ENCODE measurements at regions of chr16 and their contacts with region 1.

Region 1: DNA sequence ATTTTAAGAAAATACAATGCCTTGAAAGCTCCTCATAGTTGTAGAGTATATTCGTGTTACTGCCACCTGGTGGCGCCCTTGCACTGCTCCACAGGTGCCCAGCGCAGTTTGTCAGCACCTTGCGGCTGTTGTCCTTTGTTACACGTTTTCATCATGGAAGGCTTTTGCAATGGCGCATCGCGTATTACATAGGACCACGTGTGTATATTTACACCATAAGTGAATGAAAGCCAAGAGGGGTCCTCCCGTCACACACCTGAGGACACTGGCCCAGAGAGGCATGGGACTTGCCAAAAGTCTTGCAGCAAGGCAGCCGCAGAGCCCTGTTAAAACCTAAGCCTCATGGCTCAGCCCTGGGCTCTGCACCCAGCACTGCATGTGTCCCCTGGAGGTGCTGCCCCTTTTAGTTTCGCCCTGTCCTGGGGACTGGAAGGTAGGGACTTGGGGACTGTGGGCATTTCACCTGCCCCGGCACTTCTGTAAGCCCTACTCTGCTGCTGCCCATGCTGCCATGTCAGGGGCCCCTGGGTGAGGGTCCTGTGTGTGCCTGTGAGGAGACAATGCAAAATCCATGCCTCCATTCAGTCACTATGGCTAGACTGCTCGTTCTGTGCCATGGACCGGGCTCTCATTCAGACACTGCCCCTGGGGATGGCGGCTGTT is 24.3 kb downstream of the POLR3E start:
- DNase-seq: peak; percentile 44 to 84 (median 72)
- ATAC-seq: peak; percentile 77
- H3K4me3 ChIP-seq: no peak overlapping the region
- H3K4me3 Mint-ChIP-seq: no peak overlapping the region
- H3K27ac ChIP-seq: no peak overlapping the region
- H3K27ac Mint-ChIP-seq: peak overlapping the region; percentile 70
- H3K4me1 ChIP-seq: peaks cover 6% of the 10 kb centered on the region
- H3K4me1 Mint-ChIP-seq: peaks cover 9% of the 10 kb centered on the region
- H3K27me3 ChIP-seq: no peaks in the 10 kb centered on the region
- H3K27me3 Mint-ChIP-seq: no peaks in the 10 kb centered on the region
- CTCF ChIP-seq: peak; percentile 92

Region 2: GRCh38 chr16:21184834-21185233 is 1136.6 kb before region 1 on chr16:
- CTCF ChIA-PET with region 1: no interaction called
- POLR2A ChIA-PET with region 1: no interaction called
- intact Hi-C with region 1: loop called in 1 of 2 experiments (anchors 5 kb)
- DNase-seq: no peak
- ATAC-seq: no peak
- H3K4me3 ChIP-seq: no peak overlapping the region
- H3K4me3 Mint-ChIP-seq: no peak overlapping the region
- H3K27ac ChIP-seq: no peak overlapping the region
- H3K27ac Mint-ChIP-seq: no peak overlapping the region
- H3K4me1 ChIP-seq: no peaks in the 10 kb centered on the region
- H3K4me1 Mint-ChIP-seq: peaks cover 3% of the 10 kb centered on the region
- H3K27me3 ChIP-seq: no peaks in the 10 kb centered on the region
- H3K27me3 Mint-ChIP-seq: peaks cover 2% of the 10 kb centered on the region
- CTCF ChIP-seq: no peak

Region 3: GRCh38 chr16:21226749-21227148 is 1094.7 kb before region 1 on chr16:
- CTCF ChIA-PET with region 1: no interaction called
- POLR2A ChIA-PET with region 1: no interaction called
- intact Hi-C with region 1: no loop called
- DNase-seq: no peak
- ATAC-seq: no peak
- H3K4me3 ChIP-seq: no peak overlapping the region
- H3K4me3 Mint-ChIP-seq: no peak overlapping the region
- H3K27ac ChIP-seq: no peak overlapping the region
- H3K27ac Mint-ChIP-seq: no peak overlapping the region
- H3K4me1 ChIP-seq: no peaks in the 10 kb centered on the region
- H3K4me1 Mint-ChIP-seq: no peaks in the 10 kb centered on the region
- H3K27me3 ChIP-seq: no peaks in the 10 kb centered on the region
- H3K27me3 Mint-ChIP-seq: peaks cover 52% of the 10 kb centered on the region
- CTCF ChIP-seq: no peak

Region 4: DNA sequence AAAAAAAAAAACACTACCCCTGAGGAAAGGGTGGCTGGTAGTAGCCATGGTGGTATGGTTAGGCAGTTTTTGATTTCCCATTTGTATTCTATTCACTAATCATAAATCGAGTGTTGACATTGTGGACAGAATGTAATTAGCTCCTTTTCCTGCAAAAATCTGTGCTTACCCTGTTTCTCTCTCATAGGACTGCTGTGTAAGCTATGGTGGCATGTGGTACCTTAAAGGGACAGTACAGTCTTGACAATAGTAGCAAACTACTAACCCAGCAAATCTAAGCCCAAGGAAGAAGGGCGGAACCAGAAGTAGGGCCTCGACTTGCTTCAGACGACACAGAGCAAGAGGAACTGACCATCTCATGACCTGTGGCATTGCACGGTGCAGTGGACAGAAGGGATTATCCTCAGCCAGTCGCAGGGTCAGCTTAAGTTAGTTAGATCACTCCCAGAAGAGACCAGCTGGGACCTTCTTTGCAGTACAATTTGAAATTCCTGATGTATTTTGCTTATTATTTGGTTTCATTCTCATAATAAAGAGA is 12.1 kb after region 1 on chr16:
- CTCF ChIA-PET with region 1: interaction called, 14 read pairs
- POLR2A ChIA-PET with region 1: interaction called, 3 read pairs
- intact Hi-C with region 1: no loop called
- DNase-seq: no peak
- ATAC-seq: no peak
- H3K4me3 ChIP-seq: no peak overlapping the region
- H3K4me3 Mint-ChIP-seq: no peak overlapping the region
- H3K27ac ChIP-seq: no peak overlapping the region
- H3K27ac Mint-ChIP-seq: peak overlapping the region; percentile 27
- H3K4me1 ChIP-seq: no peaks in the 10 kb centered on the region
- H3K4me1 Mint-ChIP-seq: peaks cover 26% of the 10 kb centered on the region
- H3K27me3 ChIP-seq: no peaks in the 10 kb centered on the region
- H3K27me3 Mint-ChIP-seq: no peaks in the 10 kb centered on the region
- CTCF ChIP-seq: no peak

Region 5: GRCh38 chr16:22374311-22375116 is 53.0 kb after region 1 on chr16 and contains the start of gene CDR2:
- CTCF ChIA-PET with region 1: interaction called, 7 read pairs
- POLR2A ChIA-PET with region 1: interaction called, 4 read pairs
- intact Hi-C with region 1: loop called (anchors 2 kb)
- DNase-seq: peak; percentile 96 to 99 (median 98)
- ATAC-seq: peak; percentile 92
- H3K4me3 ChIP-seq: peak within 1 kb of the TSS; percentile 60 to 71
- H3K4me3 Mint-ChIP-seq: peak within 1 kb of the TSS; percentile 97
- H3K27ac ChIP-seq: peak within 1 kb of the TSS; percentile 51 to 77
- H3K27ac Mint-ChIP-seq: peak within 1 kb of the TSS; percentile 95
- H3K4me1 ChIP-seq: peaks cover 34% of the 10 kb centered on the region
- H3K4me1 Mint-ChIP-seq: peaks cover 49% of the 10 kb centered on the region
- H3K27me3 ChIP-seq: no peaks in the 10 kb centered on the region
- H3K27me3 Mint-ChIP-seq: no peaks in the 10 kb centered on the region
- CTCF ChIP-seq: no peak
- total RNA-seq, gene CDR2: 119 to 120 TPM

Region 6: DNA sequence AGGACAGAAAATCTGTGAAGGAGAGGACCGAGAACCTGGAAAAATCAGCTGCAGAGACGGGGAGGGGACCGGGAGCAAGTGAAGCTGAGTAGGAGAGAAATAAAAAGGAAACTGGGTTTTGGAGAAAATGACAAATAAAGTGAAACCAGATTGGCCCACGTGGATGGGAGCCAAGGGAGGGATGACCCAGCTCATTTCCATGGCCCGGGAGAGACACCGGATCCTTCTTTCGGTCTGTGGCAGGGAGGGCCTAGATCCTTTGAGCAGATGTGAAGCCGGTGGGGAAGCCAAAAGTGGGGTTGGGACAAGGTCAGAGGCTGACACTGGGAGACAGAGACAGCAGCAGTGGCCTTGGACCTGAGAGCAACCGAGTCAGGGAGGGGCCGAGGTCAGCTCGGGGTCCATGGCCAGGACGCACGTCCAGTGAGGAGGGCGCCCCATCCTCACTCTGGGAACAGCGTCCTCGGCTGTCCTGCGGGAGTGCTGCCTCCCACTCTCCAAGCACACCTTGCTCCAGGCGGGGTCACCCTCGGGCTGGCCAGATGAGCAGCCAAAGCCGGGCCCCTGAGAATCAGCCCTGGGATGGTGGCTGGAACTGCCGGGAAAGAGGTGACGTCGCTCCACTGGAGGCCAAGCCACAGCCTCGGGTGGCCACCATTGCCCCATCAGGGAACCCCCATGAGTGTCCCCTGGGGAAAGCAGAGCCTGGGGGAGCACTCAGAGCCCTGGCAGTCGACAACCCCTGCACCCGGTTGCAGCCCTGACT is 103.7 kb after region 1 on chr16:
- CTCF ChIA-PET with region 1: no interaction called
- POLR2A ChIA-PET with region 1: no interaction called
- intact Hi-C with region 1: loop called in 1 of 2 experiments (anchors 10 kb)
- DNase-seq: no peak
- ATAC-seq: no peak
- H3K4me3 ChIP-seq: no peak overlapping the region
- H3K4me3 Mint-ChIP-seq: no peak overlapping the region
- H3K27ac ChIP-seq: no peak overlapping the region
- H3K27ac Mint-ChIP-seq: no peak overlapping the region
- H3K4me1 ChIP-seq: no peaks in the 10 kb centered on the region
- H3K4me1 Mint-ChIP-seq: no peaks in the 10 kb centered on the region
- H3K27me3 ChIP-seq: no peaks in the 10 kb centered on the region
- H3K27me3 Mint-ChIP-seq: no peaks in the 10 kb centered on the region
- CTCF ChIP-seq: no peak